Activated naive CD4-positive, alpha-beta T cell treated with anti-CD3 and anti-CD28 coated beads for 36 hours (primary cell): ENCODE measurements at regions of chr20 and their contacts with region 1.

Region 1: GRCh38 chr20:43631598-43631997 is 35.3 kb upstream of the MYBL2 start:
- DNase-seq: no peak
- H3K4me3 Mint-ChIP-seq: no peak overlapping the region
- H3K27ac Mint-ChIP-seq: no peak overlapping the region
- H3K4me1 Mint-ChIP-seq: no peaks in the 10 kb centered on the region
- H3K27me3 Mint-ChIP-seq: no peaks in the 10 kb centered on the region

Region 2: GRCh38 chr20:42775037-42775436 is 856.6 kb before region 1 on chr20:
- CTCF ChIA-PET with region 1: interaction called, 10 read pairs
- intact Hi-C with region 1: no loop called
- DNase-seq: no peak
- H3K4me3 Mint-ChIP-seq: no peak overlapping the region
- H3K27ac Mint-ChIP-seq: no peak overlapping the region
- H3K4me1 Mint-ChIP-seq: no peaks in the 10 kb centered on the region
- H3K27me3 Mint-ChIP-seq: no peaks in the 10 kb centered on the region